Activated CD8-positive, alpha-beta T cell treated with anti-CD3 and anti-CD28 coated beads, Interleukin-2, amount 10 ng/mL, durations not matched to agents 7 days and 5 days (primary cell): ENCODE measurements at regions of chr4 and their contacts with region 1.

Region 1: GRCh38 chr4:1346781-1347409 is at the start of gene UVSSA:
- DNase-seq: peak; percentile 100
- ATAC-seq: peak; percentile 94
- H3K4me3 Mint-ChIP-seq: peak within 1 kb of the TSS; percentile 85
- H3K27ac Mint-ChIP-seq: peak within 1 kb of the TSS; percentile 97
- H3K4me1 Mint-ChIP-seq: peaks cover 44% of the 10 kb centered on the region
- H3K27me3 Mint-ChIP-seq: no peaks in the 10 kb centered on the region
- total RNA-seq, gene UVSSA: 16.7 to 17.0 TPM

Region 2: GRCh38 chr4:1130316-1131186 is 216.3 kb before region 1 on chr4:
- CTCF ChIA-PET with region 1: interaction called, 21 read pairs
- POLR2A ChIA-PET with region 1: interaction called, 3 read pairs
- DNase-seq: peak; percentile 85
- ATAC-seq: peak; percentile 99
- H3K4me3 Mint-ChIP-seq: no peak overlapping the region
- H3K27ac Mint-ChIP-seq: no peak overlapping the region
- H3K4me1 Mint-ChIP-seq: peaks cover 2% of the 10 kb centered on the region
- H3K27me3 Mint-ChIP-seq: peaks cover 19% of the 10 kb centered on the region

Region 3: DNA sequence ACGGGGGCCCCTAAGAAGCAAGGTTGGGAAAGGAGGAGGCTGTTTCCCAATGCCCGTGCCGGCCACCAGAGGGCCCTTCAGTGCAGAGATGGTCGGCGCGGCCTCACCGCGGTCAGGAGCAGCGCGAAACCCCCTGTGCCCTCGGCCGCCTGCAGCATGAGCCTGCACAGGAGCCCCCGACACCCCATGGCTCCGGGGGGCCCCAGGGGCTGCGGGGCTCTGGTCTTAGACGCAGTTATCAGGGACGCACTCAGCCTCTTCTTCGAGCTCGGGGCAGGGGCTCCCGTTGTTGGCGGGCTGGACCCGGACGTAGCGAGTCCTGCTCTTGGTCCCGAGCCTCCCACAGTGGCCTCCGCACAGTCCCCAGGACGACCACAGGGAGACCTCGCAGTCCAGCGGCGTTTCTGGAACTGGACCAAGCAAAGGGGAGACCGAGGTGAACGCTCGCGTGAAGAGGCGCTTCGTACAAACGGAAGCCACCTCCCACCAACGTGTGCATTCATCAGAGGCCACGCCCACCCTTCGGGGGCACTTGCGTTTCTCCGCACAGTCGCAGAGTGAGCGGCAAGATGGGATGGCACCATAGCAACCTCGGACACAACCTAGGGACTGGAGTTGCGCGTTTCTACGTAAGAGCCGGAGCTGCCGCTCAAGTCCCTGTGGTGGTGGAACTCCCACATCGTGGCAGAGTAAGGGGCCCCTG is 179.5 kb before region 1 on chr4:
- CTCF ChIA-PET with region 1: interaction called, 12 read pairs
- POLR2A ChIA-PET with region 1: interaction called, 6 read pairs
- DNase-seq: peak; percentile 95
- ATAC-seq: peak; percentile 91
- H3K4me3 Mint-ChIP-seq: peak overlapping the region; percentile 80
- H3K27ac Mint-ChIP-seq: peak overlapping the region; percentile 85
- H3K4me1 Mint-ChIP-seq: peaks cover 42% of the 10 kb centered on the region
- H3K27me3 Mint-ChIP-seq: peaks cover 20% of the 10 kb centered on the region

Region 4: GRCh38 chr4:1249148-1249730 is 97.7 kb before region 1 on chr4:
- CTCF ChIA-PET with region 1: interaction called, 8 read pairs
- POLR2A ChIA-PET with region 1: interaction called, 33 read pairs
- DNase-seq: peak; percentile 83
- ATAC-seq: peak; percentile 64
- H3K4me3 Mint-ChIP-seq: peak overlapping the region; percentile 86
- H3K27ac Mint-ChIP-seq: peak overlapping the region; percentile 95
- H3K4me1 Mint-ChIP-seq: peaks cover 66% of the 10 kb centered on the region
- H3K27me3 Mint-ChIP-seq: no peaks in the 10 kb centered on the region

Region 5: DNA sequence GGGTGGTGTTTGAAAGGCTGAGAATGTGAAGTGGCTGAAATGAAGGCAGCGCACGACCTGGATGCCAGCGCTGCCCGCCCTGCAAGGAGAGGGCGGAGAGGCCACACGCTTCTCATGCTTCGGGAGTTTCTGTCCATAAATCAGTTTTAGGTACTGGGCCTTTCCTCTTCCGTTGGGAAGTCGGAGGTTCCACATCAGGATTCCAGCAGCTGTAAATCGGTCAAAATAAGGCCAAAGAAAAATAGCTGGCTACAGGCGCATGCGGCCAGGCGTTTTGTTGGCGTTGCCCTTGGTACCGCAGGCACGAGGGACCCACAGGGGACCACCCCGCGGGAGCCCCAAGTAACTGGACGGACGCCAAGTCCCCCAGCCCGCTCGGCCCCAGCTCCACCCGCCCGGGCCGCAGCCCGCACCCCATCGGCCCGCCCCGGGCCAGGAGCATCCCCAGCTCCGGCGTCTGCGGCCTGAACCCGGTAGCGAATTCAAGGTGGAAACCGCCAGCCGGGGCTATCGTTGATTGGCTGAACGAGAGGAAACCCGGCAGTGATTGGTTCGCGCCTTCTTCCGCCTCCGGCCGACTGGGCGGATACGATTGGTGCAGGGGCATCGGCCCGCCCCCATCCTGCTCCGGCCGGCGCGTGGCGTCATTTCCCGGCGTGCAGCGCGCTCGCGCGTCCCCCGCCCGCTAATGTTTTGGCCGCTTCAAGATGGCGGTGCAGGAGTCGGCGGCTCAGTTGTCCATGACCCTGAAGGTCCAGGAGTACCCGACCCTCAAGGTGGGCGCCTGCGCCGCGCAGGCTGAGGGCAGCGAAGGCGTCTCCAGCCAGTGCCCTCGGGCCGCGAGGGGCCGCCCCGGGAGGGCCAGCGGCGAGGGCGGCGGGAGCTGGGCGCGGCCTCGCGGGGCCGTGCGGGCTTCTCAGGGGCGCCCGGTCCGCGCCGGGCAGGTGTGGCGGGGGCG is 57.4 kb before region 1 on chr4 and contains the start of gene MAEA:
- CTCF ChIA-PET with region 1: interaction called, 32 read pairs
- POLR2A ChIA-PET with region 1: interaction called, 37 read pairs
- DNase-seq: peak; percentile 98
- ATAC-seq: peak; percentile 97
- H3K4me3 Mint-ChIP-seq: peak within 1 kb of the TSS; percentile 93
- H3K27ac Mint-ChIP-seq: peak within 1 kb of the TSS; percentile 92
- H3K4me1 Mint-ChIP-seq: peaks cover 35% of the 10 kb centered on the region
- H3K27me3 Mint-ChIP-seq: no peaks in the 10 kb centered on the region
- total RNA-seq, gene MAEA: 60.3 to 65.1 TPM

Region 6: DNA sequence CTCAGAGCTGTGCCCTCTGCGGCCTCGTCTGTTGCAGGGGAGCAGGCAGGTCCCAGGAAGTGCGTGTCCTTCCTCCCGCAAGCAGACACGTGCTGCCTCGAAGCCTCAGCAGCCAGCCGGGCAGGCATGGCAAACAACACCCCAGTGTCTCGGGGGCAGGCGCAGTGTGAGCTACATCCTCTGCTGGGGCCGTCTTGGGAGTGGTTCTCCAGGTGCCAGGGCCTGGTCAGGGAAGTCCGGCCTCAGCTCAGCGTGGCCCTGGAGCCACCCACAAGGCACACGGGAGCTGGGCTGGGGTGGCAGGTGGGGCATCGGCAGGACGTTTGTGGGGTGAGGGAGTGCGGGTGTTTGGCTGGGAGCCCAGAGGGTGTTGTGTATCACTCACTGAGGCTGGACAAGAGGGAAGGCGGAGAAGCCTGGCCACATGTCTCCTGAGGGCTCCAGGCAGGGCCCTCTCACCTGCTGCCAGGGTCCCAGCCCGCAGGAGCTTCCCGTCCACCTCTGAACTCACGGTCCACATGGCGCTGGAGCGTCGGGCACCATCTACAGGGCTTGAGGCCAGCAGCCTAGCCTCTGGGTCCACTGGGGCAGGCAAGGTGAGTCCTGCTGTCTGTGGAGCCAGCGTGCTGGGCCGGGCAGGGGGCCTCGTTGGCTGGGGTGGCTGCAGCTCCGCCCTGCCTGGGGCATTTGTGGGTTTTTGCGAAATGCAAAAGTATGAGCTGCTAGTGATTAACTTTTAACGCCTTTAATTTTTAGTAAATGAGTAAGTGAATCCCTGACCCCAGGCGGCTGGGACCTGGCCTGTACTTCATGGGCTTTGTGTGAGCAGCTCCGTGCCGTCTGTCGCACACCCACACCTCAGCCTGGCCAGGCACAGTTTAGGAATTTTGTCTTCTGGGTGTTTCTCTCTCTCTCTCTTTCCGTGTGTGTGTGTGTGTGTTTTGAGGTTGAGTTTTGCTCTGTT is 17.2 kb before region 1 on chr4:
- CTCF ChIA-PET with region 1: interaction called, 11 read pairs
- POLR2A ChIA-PET with region 1: interaction called, 6 read pairs
- DNase-seq: no peak
- ATAC-seq: no peak
- H3K4me3 Mint-ChIP-seq: no peak overlapping the region
- H3K27ac Mint-ChIP-seq: peak overlapping the region; percentile 63
- H3K4me1 Mint-ChIP-seq: peaks cover 43% of the 10 kb centered on the region
- H3K27me3 Mint-ChIP-seq: no peaks in the 10 kb centered on the region